Naive thymus-derived CD4-positive, alpha-beta T cell (primary cell): ENCODE measurements at regions of chr15 and their contacts with region 1.

Region 1: DNA sequence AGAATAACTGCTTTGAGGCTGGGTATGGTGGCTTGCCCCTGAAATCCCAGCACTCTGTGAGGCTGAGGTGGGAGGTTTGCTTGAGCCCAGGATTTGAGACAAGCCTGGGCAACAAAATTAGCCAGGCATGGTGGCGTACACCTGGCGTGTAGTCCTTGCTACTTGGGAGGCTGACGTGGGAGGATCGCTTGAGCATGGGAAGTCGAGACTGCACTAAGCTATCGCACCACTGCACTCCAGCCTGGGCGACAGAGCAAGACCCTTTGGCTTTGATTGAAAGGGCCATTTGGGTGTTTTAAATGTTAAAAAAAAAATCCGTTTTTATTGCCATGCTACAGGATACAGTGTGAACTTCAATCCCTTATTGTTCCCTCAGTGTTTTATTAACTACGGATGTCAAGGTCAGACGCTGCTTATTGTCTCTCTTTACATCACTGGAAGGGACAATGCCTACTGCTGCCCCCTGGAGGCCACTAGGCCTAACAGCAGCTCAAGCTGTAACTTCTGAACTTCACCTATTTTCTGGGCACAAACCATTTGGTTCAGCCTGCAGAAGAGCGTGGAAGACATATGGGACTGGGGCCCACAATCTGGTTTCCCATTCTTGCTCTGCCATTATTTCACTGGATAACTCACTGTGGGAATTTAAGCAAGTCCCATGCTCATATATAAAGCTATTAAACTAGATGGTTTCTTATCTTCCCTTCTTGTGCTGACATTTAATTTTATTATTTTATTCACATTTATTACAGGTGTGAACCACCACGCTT is 15.3 kb upstream of the IREB2 start:
- DNase-seq: peak; percentile 34 to 62 (median 54)
- ATAC-seq: peak; percentile 94
- H3K4me3 ChIP-seq: no peak overlapping the region
- H3K4me3 Mint-ChIP-seq: no peak overlapping the region
- H3K27ac ChIP-seq: no peak overlapping the region
- H3K27ac Mint-ChIP-seq: no peak overlapping the region
- H3K4me1 ChIP-seq: no peaks in the 10 kb centered on the region
- H3K4me1 Mint-ChIP-seq: peaks cover 9 to 19% (median 15%) of the 10 kb centered on the region in 7 donors
- H3K27me3 ChIP-seq: peaks cover 0 to 4% of the 10 kb centered on the region in 2 donors
- H3K27me3 Mint-ChIP-seq: peaks cover 5 to 17% (median 11%) of the 10 kb centered on the region in 5 donors

Region 2: DNA sequence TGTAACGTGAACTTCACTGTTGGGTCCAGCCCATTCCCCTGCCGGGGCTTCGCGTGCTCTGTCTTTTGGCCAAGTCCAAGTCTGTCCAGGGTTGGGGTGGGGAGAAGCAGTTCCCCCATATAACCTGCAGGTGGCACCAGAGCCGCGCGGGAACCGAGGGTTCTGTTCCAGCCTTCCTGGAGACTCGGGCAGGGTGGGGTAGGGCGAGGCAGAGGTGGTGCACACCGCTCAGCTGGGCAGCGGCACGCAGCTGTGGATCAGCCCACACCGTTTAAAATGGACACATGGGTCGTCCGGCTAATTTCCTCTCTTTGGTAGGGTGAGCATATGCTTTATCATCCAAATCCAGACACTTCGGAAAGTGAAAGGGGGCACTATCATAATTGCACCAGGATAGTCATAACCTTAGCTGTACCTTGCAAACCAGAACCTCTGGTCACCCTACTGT is 463.3 kb before region 1 on chr15:
- CTCF ChIA-PET with region 1: no interaction called
- POLR2A ChIA-PET with region 1: no interaction called
- intact Hi-C with region 1: loop called (anchors 1 to 10 kb)
- DNase-seq: peak; percentile 41 to 81 (median 57)
- ATAC-seq: peak; percentile 97
- H3K4me3 ChIP-seq: no peak overlapping the region
- H3K4me3 Mint-ChIP-seq: peak overlapping the region in 5 of 10 donors; percentile 14 to 52 (median 35)
- H3K27ac ChIP-seq: no peak overlapping the region
- H3K27ac Mint-ChIP-seq: no peak overlapping the region
- H3K4me1 ChIP-seq: peaks cover 0 to 4% of the 10 kb centered on the region in 2 donors
- H3K4me1 Mint-ChIP-seq: peaks cover 0 to 17% (median 4%) of the 10 kb centered on the region in 7 donors
- H3K27me3 ChIP-seq: no peaks in the 10 kb centered on the region
- H3K27me3 Mint-ChIP-seq: peaks cover 5 to 38% (median 7%) of the 10 kb centered on the region in 5 donors

Region 3: DNA sequence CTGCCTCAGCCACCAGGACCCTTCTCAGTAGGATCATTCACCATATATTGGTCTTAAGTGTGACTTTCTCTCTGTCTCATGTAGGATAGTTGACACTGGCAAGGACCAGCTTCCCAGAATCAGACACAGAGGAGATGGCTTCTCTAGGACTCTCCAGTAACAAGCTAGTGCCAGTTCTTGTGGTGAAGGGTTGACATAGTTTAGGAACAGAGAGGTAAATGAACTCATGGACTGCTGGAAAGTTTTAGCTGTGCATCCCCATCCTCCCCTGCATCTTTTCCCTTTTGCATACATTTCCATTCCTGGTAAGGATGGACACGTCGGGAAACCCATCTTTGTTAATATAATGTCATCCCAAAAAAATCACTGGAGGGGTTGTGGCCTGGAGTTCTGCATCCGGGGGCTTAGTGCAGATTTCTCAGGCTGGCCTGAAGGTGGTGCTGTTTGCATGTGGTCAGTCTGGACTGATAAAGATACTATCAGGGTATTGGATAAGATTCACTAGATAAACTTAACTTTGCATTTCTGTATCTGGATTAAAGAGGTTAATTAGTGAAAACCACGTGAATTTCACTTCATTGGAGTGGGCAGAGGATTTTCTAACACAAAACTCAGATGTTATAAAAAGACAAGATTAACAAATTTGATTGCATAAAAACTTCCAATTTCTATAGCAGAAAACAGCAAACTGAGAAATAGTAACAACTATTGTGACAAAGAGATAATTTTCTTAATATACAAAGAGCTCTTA is 456.0 kb before region 1 on chr15:
- CTCF ChIA-PET with region 1: no interaction called
- POLR2A ChIA-PET with region 1: no interaction called
- intact Hi-C with region 1: loop called in 1 of 2 experiments (anchors 10 kb)
- DNase-seq: peak in 5 of 9 donors; percentile 20 to 55 (median 43)
- ATAC-seq: peak; percentile 73
- H3K4me3 ChIP-seq: no peak overlapping the region
- H3K4me3 Mint-ChIP-seq: no peak overlapping the region
- H3K27ac ChIP-seq: no peak overlapping the region
- H3K27ac Mint-ChIP-seq: peak overlapping the region in 2 of 9 donors; percentile 2 to 9
- H3K4me1 ChIP-seq: no peaks in the 10 kb centered on the region
- H3K4me1 Mint-ChIP-seq: peaks cover 0 to 3% (median 0%) of the 10 kb centered on the region in 7 donors
- H3K27me3 ChIP-seq: no peaks in the 10 kb centered on the region
- H3K27me3 Mint-ChIP-seq: peaks cover 0 to 40% (median 0%) of the 10 kb centered on the region in 5 donors

Region 4: GRCh38 chr15:78264304-78265136 is 158.2 kb before region 1 on chr15 and contains the start of gene DNAJA4:
- CTCF ChIA-PET with region 1: interaction called, 4 read pairs
- POLR2A ChIA-PET with region 1: interaction called, 4 read pairs
- intact Hi-C with region 1: loop called in 1 of 2 experiments (anchors 1 kb)
- DNase-seq: peak; percentile 60 to 74 (median 68)
- ATAC-seq: peak; percentile 82
- H3K4me3 ChIP-seq: peak within 1 kb of the TSS; percentile 74
- H3K4me3 Mint-ChIP-seq: peak within 1 kb of the TSS; percentile 81 to 94 (median 90)
- H3K27ac ChIP-seq: peak within 1 kb of the TSS; percentile 83
- H3K27ac Mint-ChIP-seq: peak within 1 kb of the TSS; percentile 87 to 96 (median 92)
- H3K4me1 ChIP-seq: peaks cover 13 to 18% of the 10 kb centered on the region in 2 donors
- H3K4me1 Mint-ChIP-seq: peaks cover 25 to 48% (median 34%) of the 10 kb centered on the region in 7 donors
- H3K27me3 ChIP-seq: no peaks in the 10 kb centered on the region
- H3K27me3 Mint-ChIP-seq: no peaks in the 10 kb centered on the region
- total RNA-seq, gene DNAJA4: 28.3 to 44.7 (median 38.1) TPM

Region 5: GRCh38 chr15:78299101-78299930 is 123.4 kb before region 1 on chr15 and contains the start of gene SKIC8:
- CTCF ChIA-PET with region 1: interaction called, 3 read pairs
- POLR2A ChIA-PET with region 1: no interaction called
- intact Hi-C with region 1: loop called in 1 of 2 experiments (anchors 2 kb)
- DNase-seq: peak; percentile 84 to 92 (median 91)
- ATAC-seq: peak; percentile 99
- H3K4me3 ChIP-seq: peak within 1 kb of the TSS; percentile 88
- H3K4me3 Mint-ChIP-seq: peak within 1 kb of the TSS; percentile 94 to 99 (median 97)
- H3K27ac ChIP-seq: peak within 1 kb of the TSS; percentile 80
- H3K27ac Mint-ChIP-seq: peak within 1 kb of the TSS; percentile 89 to 97 (median 94)
- H3K4me1 ChIP-seq: peaks cover 8 to 15% of the 10 kb centered on the region in 2 donors
- H3K4me1 Mint-ChIP-seq: peaks cover 12 to 41% (median 31%) of the 10 kb centered on the region in 7 donors
- H3K27me3 ChIP-seq: no peaks in the 10 kb centered on the region
- H3K27me3 Mint-ChIP-seq: no peaks in the 10 kb centered on the region
- total RNA-seq, gene SKIC8: 26.7 to 48.7 (median 43.6) TPM

Region 6: DNA sequence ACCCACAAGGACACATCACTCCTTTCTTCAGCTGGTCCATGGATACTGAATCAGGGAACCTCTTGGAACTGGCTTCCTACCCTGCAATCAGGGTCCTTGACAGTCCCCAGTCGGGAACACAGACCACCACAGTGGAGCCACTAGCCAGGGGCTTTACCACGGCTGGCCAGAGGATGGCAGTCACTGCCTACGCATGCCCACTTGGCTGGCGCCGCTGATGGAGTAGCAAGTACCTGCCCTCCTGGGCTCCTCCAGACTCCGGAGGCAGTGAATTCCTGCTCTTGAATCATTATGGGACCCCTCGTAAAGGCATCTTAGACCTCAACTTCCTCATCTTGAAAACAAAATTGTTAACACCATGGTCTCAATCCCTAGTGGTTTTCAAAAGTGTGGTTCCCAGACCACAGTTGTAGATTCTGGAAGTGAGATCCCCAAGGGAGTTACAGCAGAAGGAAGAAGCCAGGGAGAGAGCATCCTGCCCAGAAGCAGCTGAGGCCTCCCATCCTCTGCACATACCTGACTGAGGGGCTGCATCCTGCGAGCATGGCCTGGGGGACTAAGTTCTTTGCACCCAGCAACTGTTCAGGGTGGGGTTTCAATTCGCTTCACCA is 114.2 kb before region 1 on chr15:
- CTCF ChIA-PET with region 1: no interaction called
- POLR2A ChIA-PET with region 1: no interaction called
- intact Hi-C with region 1: loop called (anchors 1 to 5 kb)
- DNase-seq: peak in 5 of 9 donors; percentile 11 to 53 (median 20)
- ATAC-seq: peak; percentile 76
- H3K4me3 ChIP-seq: no peak overlapping the region
- H3K4me3 Mint-ChIP-seq: no peak overlapping the region
- H3K27ac ChIP-seq: no peak overlapping the region
- H3K27ac Mint-ChIP-seq: no peak overlapping the region
- H3K4me1 ChIP-seq: no peaks in the 10 kb centered on the region
- H3K4me1 Mint-ChIP-seq: no peaks in the 10 kb centered on the region
- H3K27me3 ChIP-seq: no peaks in the 10 kb centered on the region
- H3K27me3 Mint-ChIP-seq: peaks cover 0 to 14% (median 10%) of the 10 kb centered on the region in 5 donors

Region 7: DNA sequence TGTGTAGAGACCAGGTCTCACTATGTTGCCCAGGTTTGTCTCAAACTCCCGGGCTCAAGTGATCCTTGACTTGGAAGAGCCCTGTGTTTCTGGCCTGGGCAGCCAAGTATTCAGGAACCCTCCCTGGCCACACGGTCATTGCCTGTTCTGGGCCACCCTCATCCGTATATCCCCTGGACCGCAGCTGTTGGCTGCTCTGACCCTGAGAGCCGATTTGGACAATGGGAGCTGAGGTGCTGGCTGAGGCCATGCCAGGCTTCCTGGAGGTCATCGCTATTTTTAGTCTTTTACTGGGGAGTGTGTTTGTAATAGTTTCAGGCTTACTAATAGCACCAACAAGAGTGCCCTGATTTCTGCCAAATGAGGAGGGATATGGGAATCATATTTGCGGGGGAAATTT is 327.8 kb after region 1 on chr15:
- CTCF ChIA-PET with region 1: no interaction called
- POLR2A ChIA-PET with region 1: no interaction called
- intact Hi-C with region 1: no loop called
- DNase-seq: no peak
- ATAC-seq: no peak
- H3K4me3 ChIP-seq: no peak overlapping the region
- H3K4me3 Mint-ChIP-seq: peak overlapping the region; percentile 29 to 76 (median 58)
- H3K27ac ChIP-seq: no peak overlapping the region
- H3K27ac Mint-ChIP-seq: peak overlapping the region in 2 of 9 donors; percentile 22 to 43
- H3K4me1 ChIP-seq: peaks cover 0 to 6% of the 10 kb centered on the region in 2 donors
- H3K4me1 Mint-ChIP-seq: peaks cover 4 to 6% (median 5%) of the 10 kb centered on the region in 7 donors
- H3K27me3 ChIP-seq: no peaks in the 10 kb centered on the region
- H3K27me3 Mint-ChIP-seq: no peaks in the 10 kb centered on the region